CD4-positive, alpha-beta memory T cell (primary cell): ENCODE measurements at regions of chr16 and their contacts with region 1.

Region 1: GRCh38 chr16:68396481-68396880 is 51.8 kb downstream of the SMPD3 start:
- DNase-seq: peak; percentile 51 to 73 (median 68)
- H3K4me3 ChIP-seq: no peak overlapping the region
- H3K4me3 Mint-ChIP-seq: peak overlapping the region in 1 of 8 donors; percentile 34
- H3K27ac ChIP-seq: no peak overlapping the region
- H3K27ac Mint-ChIP-seq: peak overlapping the region in 5 of 7 donors; percentile 48 to 92 (median 64)
- H3K4me1 ChIP-seq: peaks cover 29% of the 10 kb centered on the region
- H3K4me1 Mint-ChIP-seq: peaks cover 10 to 37% (median 22%) of the 10 kb centered on the region in 4 donors
- H3K27me3 ChIP-seq: no peaks in the 10 kb centered on the region
- H3K27me3 Mint-ChIP-seq: peaks cover 0 to 1% of the 10 kb centered on the region in 2 donors

Region 2: GRCh38 chr16:68244903-68245853 is 151.3 kb before region 1 on chr16 and contains the start of gene PLA2G15:
- CTCF ChIA-PET with region 1: no interaction called
- POLR2A ChIA-PET with region 1: no interaction called
- intact Hi-C with region 1: no loop called
- DNase-seq: peak; percentile 93 to 96 (median 94)
- H3K4me3 ChIP-seq: peak within 1 kb of the TSS; percentile 91 to 98
- H3K4me3 Mint-ChIP-seq: peak within 1 kb of the TSS; percentile 93 to 99 (median 98)
- H3K27ac ChIP-seq: peak within 1 kb of the TSS; percentile 58
- H3K27ac Mint-ChIP-seq: peak within 1 kb of the TSS; percentile 77 to 95 (median 93)
- H3K4me1 ChIP-seq: peaks cover 27% of the 10 kb centered on the region
- H3K4me1 Mint-ChIP-seq: peaks cover 15 to 31% (median 20%) of the 10 kb centered on the region in 4 donors
- H3K27me3 ChIP-seq: no peaks in the 10 kb centered on the region
- H3K27me3 Mint-ChIP-seq: no peaks in the 10 kb centered on the region
- total RNA-seq, gene PLA2G15: 12.0 to 13.3 TPM

Region 3: DNA sequence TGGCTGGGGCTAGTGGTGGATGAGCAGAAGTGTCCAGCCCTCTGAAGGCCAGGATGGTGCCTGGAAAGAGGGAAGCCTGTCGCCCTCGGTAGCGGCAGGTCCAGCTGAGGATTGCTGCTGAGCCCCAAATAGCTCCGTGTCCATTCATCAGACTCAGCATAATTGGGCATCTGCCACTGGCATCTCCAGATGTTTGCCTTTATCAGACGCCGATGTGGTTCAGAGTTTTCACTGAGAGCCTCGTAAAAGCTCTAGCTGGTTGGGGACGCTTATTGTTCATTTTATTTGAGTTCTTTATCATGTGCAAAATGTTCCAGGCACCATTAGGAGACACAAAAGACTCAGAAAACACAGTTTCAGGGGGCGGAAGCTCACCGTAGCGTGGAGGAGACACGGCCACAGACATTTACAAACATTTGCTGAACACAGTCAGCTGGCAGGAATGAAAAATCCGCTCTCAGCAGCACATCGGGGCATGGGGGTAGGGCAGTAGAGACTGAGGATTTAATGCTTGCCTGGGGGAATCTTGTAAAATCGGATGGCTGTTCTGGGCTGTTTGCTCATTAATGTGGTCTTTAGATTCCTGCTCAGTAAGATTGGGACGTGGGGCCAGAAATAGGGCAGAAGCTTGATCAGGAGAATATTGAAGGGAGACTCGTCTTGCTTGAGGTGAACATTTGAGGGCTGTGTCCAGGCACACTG is 10.1 kb after region 1 on chr16:
- CTCF ChIA-PET with region 1: interaction called, 43 read pairs
- POLR2A ChIA-PET with region 1: interaction called, 4 read pairs
- intact Hi-C with region 1: no loop called
- DNase-seq: no peak
- H3K4me3 ChIP-seq: no peak overlapping the region
- H3K4me3 Mint-ChIP-seq: no peak overlapping the region
- H3K27ac ChIP-seq: no peak overlapping the region
- H3K27ac Mint-ChIP-seq: no peak overlapping the region
- H3K4me1 ChIP-seq: peaks cover 3% of the 10 kb centered on the region
- H3K4me1 Mint-ChIP-seq: peaks cover 4 to 19% (median 10%) of the 10 kb centered on the region in 4 donors
- H3K27me3 ChIP-seq: no peaks in the 10 kb centered on the region
- H3K27me3 Mint-ChIP-seq: peaks cover 1 to 5% of the 10 kb centered on the region in 2 donors

Region 4: GRCh38 chr16:68417711-68418301 is 21.3 kb after region 1 on chr16:
- CTCF ChIA-PET with region 1: interaction called, 103 read pairs
- POLR2A ChIA-PET with region 1: interaction called, 22 read pairs
- intact Hi-C with region 1: loop called (anchors 2 kb)
- DNase-seq: peak; percentile 82 to 90 (median 87)
- H3K4me3 ChIP-seq: peak overlapping the region; percentile 8 to 25
- H3K4me3 Mint-ChIP-seq: peak overlapping the region; percentile 75 to 88 (median 85)
- H3K27ac ChIP-seq: peak overlapping the region; percentile 45
- H3K27ac Mint-ChIP-seq: peak overlapping the region; percentile 90 to 99 (median 95)
- H3K4me1 ChIP-seq: peaks cover 65% of the 10 kb centered on the region
- H3K4me1 Mint-ChIP-seq: peaks cover 45 to 84% (median 67%) of the 10 kb centered on the region in 4 donors
- H3K27me3 ChIP-seq: no peaks in the 10 kb centered on the region
- H3K27me3 Mint-ChIP-seq: no peaks in the 10 kb centered on the region

Region 5: DNA sequence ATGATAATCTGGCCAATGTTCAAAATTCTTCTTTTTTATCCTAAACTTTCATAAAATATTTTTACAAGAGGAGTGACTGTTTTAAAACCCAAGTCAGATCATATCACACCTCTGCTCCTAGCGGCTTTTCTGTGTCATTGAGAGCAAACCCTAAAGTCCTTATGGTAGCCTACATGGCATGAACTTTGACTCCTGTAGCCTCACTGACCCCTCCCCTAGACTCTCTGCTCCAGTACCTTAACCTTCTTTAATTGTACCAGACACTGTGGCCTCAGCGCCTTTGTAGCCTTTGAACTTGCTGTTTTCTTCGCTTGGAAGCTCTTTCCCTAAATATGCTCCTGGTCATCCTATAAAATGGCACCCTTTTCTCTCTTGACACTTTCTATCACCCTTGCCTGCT is 59.1 kb after region 1 on chr16:
- CTCF ChIA-PET with region 1: interaction called, 13 read pairs
- POLR2A ChIA-PET with region 1: no interaction called
- intact Hi-C with region 1: no loop called
- DNase-seq: no peak
- H3K4me3 ChIP-seq: no peak overlapping the region
- H3K4me3 Mint-ChIP-seq: no peak overlapping the region
- H3K27ac ChIP-seq: no peak overlapping the region
- H3K27ac Mint-ChIP-seq: no peak overlapping the region
- H3K4me1 ChIP-seq: peaks cover 17% of the 10 kb centered on the region
- H3K4me1 Mint-ChIP-seq: peaks cover 0 to 1% (median 0%) of the 10 kb centered on the region in 4 donors
- H3K27me3 ChIP-seq: no peaks in the 10 kb centered on the region
- H3K27me3 Mint-ChIP-seq: peaks cover under 1 to 1% of the 10 kb centered on the region in 2 donors

Region 6: DNA sequence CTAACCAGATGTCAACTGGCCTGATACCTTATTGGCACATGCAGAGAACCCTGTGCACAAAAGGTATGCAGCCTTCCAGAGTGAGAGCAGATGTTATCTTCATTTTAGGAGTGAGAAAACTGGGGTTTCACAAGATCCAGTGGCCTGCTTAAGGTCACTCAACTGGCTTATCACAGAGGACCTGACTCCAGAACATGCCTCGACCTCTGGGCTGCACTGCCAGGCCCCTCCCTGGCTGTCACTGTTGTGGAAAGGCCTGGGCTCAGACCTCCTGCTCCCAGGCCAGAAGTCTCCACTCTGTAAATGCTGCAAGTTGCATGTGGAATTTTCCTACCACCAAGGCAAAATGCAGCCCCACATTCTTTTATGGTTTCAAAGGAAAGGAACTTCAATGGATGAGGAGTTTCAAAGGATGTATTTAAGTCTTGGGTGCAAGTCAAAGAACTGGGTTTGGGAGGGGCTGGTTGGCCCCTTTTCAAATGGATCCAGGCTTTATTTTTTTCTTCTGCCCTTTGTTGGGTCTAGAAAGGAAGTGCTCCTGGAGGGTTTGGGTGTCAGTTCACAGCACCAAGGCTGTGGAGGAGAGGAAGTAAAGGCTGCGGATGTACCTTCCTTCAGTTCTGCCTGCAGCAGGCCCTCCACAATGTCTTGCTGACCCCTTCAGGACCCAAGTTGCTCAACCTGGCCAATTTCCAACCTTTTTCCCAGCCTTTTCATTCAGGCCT is 82.2 kb after region 1 on chr16:
- CTCF ChIA-PET with region 1: interaction called, 18 read pairs
- POLR2A ChIA-PET with region 1: no interaction called
- intact Hi-C with region 1: no loop called
- DNase-seq: no peak
- H3K4me3 ChIP-seq: no peak overlapping the region
- H3K4me3 Mint-ChIP-seq: no peak overlapping the region
- H3K27ac ChIP-seq: no peak overlapping the region
- H3K27ac Mint-ChIP-seq: no peak overlapping the region
- H3K4me1 ChIP-seq: no peaks in the 10 kb centered on the region
- H3K4me1 Mint-ChIP-seq: no peaks in the 10 kb centered on the region
- H3K27me3 ChIP-seq: no peaks in the 10 kb centered on the region
- H3K27me3 Mint-ChIP-seq: no peaks in the 10 kb centered on the region

Region 7: DNA sequence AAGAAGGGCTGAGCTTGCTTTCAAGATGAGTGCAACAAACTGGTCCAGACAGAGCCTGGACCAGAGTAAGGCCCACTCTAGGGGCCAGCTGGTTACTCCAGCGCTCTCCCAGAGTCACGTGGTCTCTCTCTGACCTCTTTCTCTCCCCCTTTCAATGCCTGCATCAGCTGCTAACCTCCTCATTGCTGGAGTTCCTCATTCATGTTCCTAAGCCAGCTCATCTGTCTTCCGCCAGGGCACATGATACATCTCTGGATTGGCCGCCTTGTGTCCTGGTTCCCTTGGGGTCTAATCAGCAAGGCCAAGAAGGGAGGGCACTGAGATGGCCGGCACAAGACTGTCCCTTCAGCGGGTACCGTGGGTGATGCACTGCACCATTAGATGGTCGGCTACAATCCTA is 115.7 kb after region 1 on chr16:
- CTCF ChIA-PET with region 1: interaction called, 414 read pairs
- POLR2A ChIA-PET with region 1: interaction called, 22 read pairs
- intact Hi-C with region 1: loop called (anchors 1 kb)
- DNase-seq: no peak
- H3K4me3 ChIP-seq: no peak overlapping the region
- H3K4me3 Mint-ChIP-seq: no peak overlapping the region
- H3K27ac ChIP-seq: no peak overlapping the region
- H3K27ac Mint-ChIP-seq: peak overlapping the region in 3 of 7 donors; percentile 27 to 72 (median 64)
- H3K4me1 ChIP-seq: peaks cover 7% of the 10 kb centered on the region
- H3K4me1 Mint-ChIP-seq: peaks cover 0 to 4% (median 2%) of the 10 kb centered on the region in 4 donors
- H3K27me3 ChIP-seq: no peaks in the 10 kb centered on the region
- H3K27me3 Mint-ChIP-seq: no peaks in the 10 kb centered on the region